PC-9 (cell line): ENCODE measurements at regions of chr15 and their contacts with region 1.

Region 1: GRCh38 chr15:40103176-40103858 is 5.4 kb downstream of the BMF start:
- DNase-seq: peak; percentile 78 to 95
- H3K4me3 ChIP-seq: peak overlapping the region; percentile 42; the same call in 1 of the 2 replicates
- H3K27ac ChIP-seq: peak overlapping the region; percentile 55
- H3K4me1 ChIP-seq: peaks cover 98% of the 10 kb centered on the region
- H3K27me3 ChIP-seq: no peaks in the 10 kb centered on the region
- CTCF ChIP-seq: no peak

Region 2: DNA sequence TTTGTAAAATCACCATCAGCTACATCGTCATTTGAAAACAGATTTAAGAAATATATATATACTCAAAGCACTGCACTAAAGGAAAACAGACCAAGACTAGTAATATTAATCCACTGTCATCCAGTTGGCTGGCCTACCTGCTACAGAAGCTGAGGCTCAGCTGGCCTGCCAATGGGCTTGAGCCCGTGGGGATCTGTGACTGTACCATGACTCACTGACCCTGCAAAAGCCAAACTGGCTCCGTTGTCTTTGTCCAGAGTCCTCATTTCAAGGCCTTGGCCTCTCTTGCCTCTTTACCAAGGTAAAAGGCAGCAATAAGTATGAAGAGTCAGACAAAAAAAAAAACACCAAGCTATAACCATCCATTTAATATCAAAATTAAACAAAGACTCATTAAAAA is 1075.2 kb before region 1 on chr15:
- CTCF ChIA-PET with region 1: no interaction called
- POLR2A ChIA-PET with region 1: no interaction called
- intact Hi-C with region 1: no loop called
- DNase-seq: peak in 1 of 2 experiments; percentile 8
- H3K4me3 ChIP-seq: no peak overlapping the region
- H3K27ac ChIP-seq: no peak overlapping the region
- H3K4me1 ChIP-seq: no peaks in the 10 kb centered on the region
- H3K27me3 ChIP-seq: no peaks in the 10 kb centered on the region
- CTCF ChIP-seq: no peak

Region 3: DNA sequence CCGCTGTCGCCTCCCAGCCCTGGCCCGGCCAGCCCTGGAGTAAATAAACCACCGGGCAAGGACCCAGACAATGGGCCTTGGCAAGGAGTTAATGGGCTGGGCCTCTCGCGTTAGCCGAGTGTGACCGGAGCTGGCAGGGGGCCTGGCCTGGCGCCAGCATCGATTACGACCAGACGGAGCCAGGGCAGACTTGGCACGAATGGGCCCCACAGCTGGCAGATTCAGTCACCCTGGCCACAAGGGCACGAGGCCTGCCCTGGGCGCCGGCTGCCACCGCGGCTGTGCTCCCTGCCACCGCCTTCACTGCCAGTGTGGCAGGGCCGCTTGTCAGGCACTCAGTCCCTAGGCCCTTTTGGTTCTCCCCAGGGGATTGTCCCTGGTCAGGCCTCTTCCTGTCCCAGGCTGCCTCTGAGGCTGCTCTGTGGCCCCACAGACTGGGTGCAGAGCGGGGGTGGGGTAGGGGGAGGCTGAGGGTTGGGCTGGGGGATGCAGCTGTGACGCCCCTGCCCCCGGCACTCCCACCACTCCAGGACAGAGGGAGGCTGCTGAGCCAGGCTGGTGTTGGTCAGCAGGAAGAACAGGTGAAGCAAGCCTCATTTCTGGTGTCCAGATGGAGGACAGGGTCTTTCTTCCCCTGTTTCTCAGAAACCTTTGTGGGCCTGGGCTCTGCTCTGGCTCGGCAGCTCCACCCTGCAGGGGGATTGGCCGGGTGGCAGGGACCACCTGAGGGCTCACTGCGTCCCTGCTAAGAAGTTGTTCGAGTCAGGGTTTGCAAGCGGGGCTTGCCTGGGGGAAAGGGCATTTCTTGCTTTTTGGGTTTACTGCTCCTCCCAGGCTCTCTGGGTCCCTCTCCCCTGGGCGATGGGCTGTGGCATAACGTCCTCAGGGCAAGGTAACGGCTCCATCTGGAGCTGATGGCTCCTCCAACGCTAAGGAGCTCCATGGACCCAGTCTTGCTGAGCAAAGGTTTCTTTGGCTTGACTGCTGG is 33.8 kb before region 1 on chr15:
- CTCF ChIA-PET with region 1: no interaction called
- POLR2A ChIA-PET with region 1: interaction called, 3 read pairs
- intact Hi-C with region 1: loop called (anchors 1 kb)
- DNase-seq: peak; percentile 87 to 97
- H3K4me3 ChIP-seq: no peak overlapping the region
- H3K27ac ChIP-seq: 0 out of 2 replicates have a peak overlapping the region, but pooled peaks have one; percentile 1
- H3K4me1 ChIP-seq: peaks cover 48% of the 10 kb centered on the region
- H3K27me3 ChIP-seq: no peaks in the 10 kb centered on the region
- CTCF ChIP-seq: no peak

Region 4: DNA sequence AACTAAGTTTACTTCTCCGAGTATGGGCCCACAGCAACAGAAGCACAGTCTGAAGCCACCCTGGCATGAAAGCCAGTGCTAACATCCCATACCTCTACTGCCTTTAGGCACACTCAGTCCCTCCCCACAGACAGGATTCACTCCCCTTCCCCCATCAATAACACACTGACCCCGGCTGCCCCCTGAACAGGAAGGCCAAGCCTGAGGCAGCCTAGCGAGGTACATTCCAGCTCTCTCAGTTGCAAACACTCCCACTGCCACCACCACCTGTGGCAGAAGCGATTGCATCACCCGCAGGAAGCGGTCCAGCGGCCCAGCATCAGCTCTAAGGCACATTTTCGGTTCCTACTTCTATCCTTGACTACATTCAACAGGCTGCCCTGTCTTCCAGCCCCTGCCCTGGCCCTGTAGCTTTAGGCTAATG is 12.4 kb after region 1 on chr15:
- CTCF ChIA-PET with region 1: no interaction called
- POLR2A ChIA-PET with region 1: no interaction called
- intact Hi-C with region 1: no loop called
- DNase-seq: peak; percentile 50 to 57
- H3K4me3 ChIP-seq: no peak overlapping the region
- H3K27ac ChIP-seq: 0 out of 2 replicates have a peak overlapping the region, but pooled peaks have one; percentile 26
- H3K4me1 ChIP-seq: peaks cover 21% of the 10 kb centered on the region
- H3K27me3 ChIP-seq: no peaks in the 10 kb centered on the region
- CTCF ChIP-seq: no peak

Region 5: DNA sequence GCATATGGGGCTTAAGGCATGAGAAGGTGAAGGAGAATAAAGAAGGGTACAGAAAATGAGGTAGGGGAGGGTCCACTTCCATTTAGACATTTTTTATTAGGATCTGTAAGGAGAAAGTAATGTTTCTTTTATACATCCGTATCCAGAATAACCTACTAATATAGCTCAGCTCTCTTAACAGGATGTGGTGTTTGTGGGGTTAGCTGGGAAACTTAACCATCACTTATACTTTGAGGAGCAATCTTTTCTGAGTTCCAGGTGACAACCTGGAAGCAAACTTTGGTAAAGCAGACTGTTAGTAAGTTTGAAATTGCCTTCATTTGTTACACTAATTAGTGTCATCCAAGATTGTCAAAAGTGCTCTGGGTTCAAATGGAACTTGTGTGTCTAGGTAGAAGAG is 94.1 kb after region 1 on chr15:
- CTCF ChIA-PET with region 1: interaction called, 16 read pairs
- POLR2A ChIA-PET with region 1: no interaction called
- intact Hi-C with region 1: no loop called
- DNase-seq: no peak
- H3K4me3 ChIP-seq: no peak overlapping the region
- H3K27ac ChIP-seq: no peak overlapping the region
- H3K4me1 ChIP-seq: no peaks in the 10 kb centered on the region
- H3K27me3 ChIP-seq: no peaks in the 10 kb centered on the region
- CTCF ChIP-seq: no peak